B cell (primary cell): ENCODE measurements at regions of chr11 and their contacts with region 1.

Region 1: GRCh38 chr11:122796128-122796717 is 42.1 kb upstream of the CRTAM start:
- DNase-seq: peak; percentile 75
- ATAC-seq: peak; percentile 93
- H3K4me3 ChIP-seq: no peak overlapping the region
- H3K4me3 Mint-ChIP-seq: no peak overlapping the region
- H3K27ac ChIP-seq: no peak overlapping the region
- H3K27ac Mint-ChIP-seq: no peak overlapping the region
- H3K4me1 ChIP-seq: no peaks in the 10 kb centered on the region
- H3K4me1 Mint-ChIP-seq: peaks cover 4% of the 10 kb centered on the region
- H3K27me3 ChIP-seq: no peaks in the 10 kb centered on the region
- H3K27me3 Mint-ChIP-seq: no peaks in the 10 kb centered on the region
- CTCF ChIP-seq: peak; percentile 96

Region 2: GRCh38 chr11:122743949-122744348 is 52.3 kb before region 1 on chr11:
- CTCF ChIA-PET with region 1: no interaction called
- POLR2A ChIA-PET with region 1: no interaction called
- intact Hi-C with region 1: no loop called
- DNase-seq: peak; percentile 79
- ATAC-seq: peak; percentile 58
- H3K4me3 ChIP-seq: peak overlapping the region in 1 of 5 experiments; percentile 22
- H3K4me3 Mint-ChIP-seq: no peak overlapping the region
- H3K27ac ChIP-seq: peak overlapping the region; percentile 25 to 26
- H3K27ac Mint-ChIP-seq: no peak overlapping the region
- H3K4me1 ChIP-seq: peaks cover 46 to 63% of the 10 kb centered on the region in 2 donors
- H3K4me1 Mint-ChIP-seq: peaks cover 10% of the 10 kb centered on the region
- H3K27me3 ChIP-seq: peaks cover 0 to 12% (median 2%) of the 10 kb centered on the region in 4 experiments
- H3K27me3 Mint-ChIP-seq: no peaks in the 10 kb centered on the region
- CTCF ChIP-seq: no peak

Region 3: GRCh38 chr11:122781378-122782195 is 14.6 kb before region 1 on chr11:
- CTCF ChIA-PET with region 1: interaction called, 12 read pairs
- POLR2A ChIA-PET with region 1: interaction called, 5 read pairs
- intact Hi-C with region 1: no loop called
- DNase-seq: peak; percentile 78
- ATAC-seq: peak; percentile 90
- H3K4me3 ChIP-seq: no peak overlapping the region
- H3K4me3 Mint-ChIP-seq: no peak overlapping the region
- H3K27ac ChIP-seq: no peak overlapping the region
- H3K27ac Mint-ChIP-seq: no peak overlapping the region
- H3K4me1 ChIP-seq: no peaks in the 10 kb centered on the region
- H3K4me1 Mint-ChIP-seq: no peaks in the 10 kb centered on the region
- H3K27me3 ChIP-seq: no peaks in the 10 kb centered on the region
- H3K27me3 Mint-ChIP-seq: no peaks in the 10 kb centered on the region
- CTCF ChIP-seq: peak; percentile 93

Region 4: GRCh38 chr11:122814401-122814800 is 18.2 kb after region 1 on chr11:
- CTCF ChIA-PET with region 1: interaction called, 14 read pairs
- POLR2A ChIA-PET with region 1: no interaction called
- intact Hi-C with region 1: no loop called
- DNase-seq: no peak
- ATAC-seq: no peak
- H3K4me3 ChIP-seq: no peak overlapping the region
- H3K4me3 Mint-ChIP-seq: no peak overlapping the region
- H3K27ac ChIP-seq: no peak overlapping the region
- H3K27ac Mint-ChIP-seq: no peak overlapping the region
- H3K4me1 ChIP-seq: peaks cover 12 to 14% of the 10 kb centered on the region in 2 donors
- H3K4me1 Mint-ChIP-seq: peaks cover 18% of the 10 kb centered on the region
- H3K27me3 ChIP-seq: no peaks in the 10 kb centered on the region
- H3K27me3 Mint-ChIP-seq: no peaks in the 10 kb centered on the region
- CTCF ChIP-seq: peak; percentile 12

Region 5: GRCh38 chr11:122843281-122844141 is 47.3 kb after region 1 on chr11:
- CTCF ChIA-PET with region 1: interaction called, 10 read pairs
- POLR2A ChIA-PET with region 1: no interaction called
- intact Hi-C with region 1: no loop called
- DNase-seq: peak; percentile 72
- ATAC-seq: peak; percentile 90
- H3K4me3 ChIP-seq: peak overlapping the region in 2 of 5 experiments; percentile 29 to 36
- H3K4me3 Mint-ChIP-seq: peak overlapping the region; percentile 69
- H3K27ac ChIP-seq: peak overlapping the region; percentile 42 to 83
- H3K27ac Mint-ChIP-seq: peak overlapping the region; percentile 78
- H3K4me1 ChIP-seq: peaks cover 24 to 35% of the 10 kb centered on the region in 2 donors
- H3K4me1 Mint-ChIP-seq: peaks cover 41% of the 10 kb centered on the region
- H3K27me3 ChIP-seq: no peaks in the 10 kb centered on the region
- H3K27me3 Mint-ChIP-seq: no peaks in the 10 kb centered on the region
- CTCF ChIP-seq: no peak

Region 6: GRCh38 chr11:123020968-123021367 is 224.7 kb after region 1 on chr11:
- CTCF ChIA-PET with region 1: interaction called, 12 read pairs
- POLR2A ChIA-PET with region 1: no interaction called
- intact Hi-C with region 1: loop called (anchors 5 kb)
- DNase-seq: peak; percentile 58
- ATAC-seq: peak; percentile 82
- H3K4me3 ChIP-seq: no peak overlapping the region
- H3K4me3 Mint-ChIP-seq: no peak overlapping the region
- H3K27ac ChIP-seq: no peak overlapping the region
- H3K27ac Mint-ChIP-seq: no peak overlapping the region
- H3K4me1 ChIP-seq: peaks cover 0 to 9% of the 10 kb centered on the region in 2 donors
- H3K4me1 Mint-ChIP-seq: peaks cover 7% of the 10 kb centered on the region
- H3K27me3 ChIP-seq: peaks cover 0 to 6% (median 2%) of the 10 kb centered on the region in 4 experiments
- H3K27me3 Mint-ChIP-seq: peaks cover 12% of the 10 kb centered on the region
- CTCF ChIP-seq: peak; percentile 67

Region 7: GRCh38 chr11:123054301-123055065 is 258.3 kb after region 1 on chr11:
- CTCF ChIA-PET with region 1: interaction called, 12 read pairs
- POLR2A ChIA-PET with region 1: no interaction called
- intact Hi-C with region 1: loop called (anchors 1 kb)
- DNase-seq: peak; percentile 79
- ATAC-seq: peak; percentile 87
- H3K4me3 ChIP-seq: no peak overlapping the region
- H3K4me3 Mint-ChIP-seq: peak overlapping the region; percentile 38
- H3K27ac ChIP-seq: no peak overlapping the region
- H3K27ac Mint-ChIP-seq: peak overlapping the region; percentile 85
- H3K4me1 ChIP-seq: peaks cover 35 to 46% of the 10 kb centered on the region in 2 donors
- H3K4me1 Mint-ChIP-seq: peaks cover 56% of the 10 kb centered on the region
- H3K27me3 ChIP-seq: no peaks in the 10 kb centered on the region
- H3K27me3 Mint-ChIP-seq: no peaks in the 10 kb centered on the region
- CTCF ChIP-seq: peak; percentile 83